ENCODE measurements at regions of chr13 and their contacts with region 1.

Region 1: GRCh38 chr13:93851227-93851626 is 624.6 kb downstream of the GPC6 start:
- DNase-seq: no peak
- H3K4me3 ChIP-seq: no peak overlapping the region
- H3K27ac ChIP-seq: no peak overlapping the region
- H3K4me1 ChIP-seq: no peaks in the 10 kb centered on the region
- H3K27me3 ChIP-seq: no peaks in the 10 kb centered on the region
- CTCF ChIP-seq: no peak
- POLR2A ChIP-seq: no peak

Region 2: GRCh38 chr13:93116809-93117208 is 734.4 kb before region 1 on chr13:
- intact Hi-C with region 1: loop called (anchors 5 kb)
- DNase-seq: no peak
- H3K4me3 ChIP-seq: no peak overlapping the region
- H3K27ac ChIP-seq: no peak overlapping the region
- H3K4me1 ChIP-seq: no peaks in the 10 kb centered on the region
- H3K27me3 ChIP-seq: no peaks in the 10 kb centered on the region
- CTCF ChIP-seq: no peak
- POLR2A ChIP-seq: no peak

Region 3: GRCh38 chr13:93875547-93875946 is 24.3 kb after region 1 on chr13:
- intact Hi-C with region 1: no loop called
- DNase-seq: no peak
- H3K4me3 ChIP-seq: no peak overlapping the region
- H3K27ac ChIP-seq: no peak overlapping the region
- H3K4me1 ChIP-seq: no peaks in the 10 kb centered on the region
- H3K27me3 ChIP-seq: no peaks in the 10 kb centered on the region
- CTCF ChIP-seq: no peak
- POLR2A ChIP-seq: no peak